ENCODE measurements at regions of chrX and their contacts with region 1.

Region 1: GRCh38 chrX:79270401-79270800 is 96.7 kb downstream of the ITM2A start:
- DNase-seq: peak; percentile 36 to 44
- ATAC-seq: peak in 7 of 8 donors; percentile 58 to 88 (median 75)
- H3K4me3 ChIP-seq: no peak overlapping the region
- H3K27ac ChIP-seq: peak overlapping the region in 3 of 10 donors; percentile 29 to 65 (median 56)
- H3K4me1 ChIP-seq: peaks cover 0 to 14% (median 0%) of the 10 kb centered on the region in 9 donors
- H3K27me3 ChIP-seq: no peaks in the 10 kb centered on the region
- CTCF ChIP-seq: peak in 8 of 9 donors; percentile 7 to 71 (median 56)

Region 2: DNA sequence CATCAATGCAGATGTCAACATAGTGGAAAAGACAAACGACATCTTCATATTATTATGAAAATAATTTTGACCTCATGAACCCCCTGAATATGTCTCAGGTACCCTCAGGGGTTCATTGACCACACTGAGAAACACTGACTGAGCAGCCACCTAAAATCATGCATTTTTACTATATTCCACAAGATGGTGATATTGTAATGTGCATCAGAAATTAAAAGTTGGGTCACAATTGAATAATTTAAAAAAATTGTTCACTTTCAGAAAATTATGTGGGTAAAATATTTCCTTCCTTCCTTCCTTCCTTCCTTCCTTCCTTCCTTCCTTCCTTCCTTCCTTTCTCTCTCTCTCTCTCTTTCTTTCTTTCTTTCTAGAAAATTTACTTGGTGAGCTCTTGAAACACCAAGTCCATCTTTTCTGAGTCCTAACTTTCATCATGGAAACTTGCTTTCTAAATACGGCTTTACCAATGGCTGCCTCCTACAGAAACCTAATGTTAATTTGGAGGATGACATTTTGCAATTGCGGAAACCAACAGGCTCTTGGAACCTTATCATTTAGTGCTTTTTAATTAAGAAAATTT is 714.9 kb before region 1 on chrX:
- intact Hi-C with region 1: loop called in 1 of 10 experiments (anchors 5 kb)
- DNase-seq: no peak
- ATAC-seq: no peak
- H3K4me3 ChIP-seq: no peak overlapping the region
- H3K27ac ChIP-seq: no peak overlapping the region
- H3K4me1 ChIP-seq: no peaks in the 10 kb centered on the region
- H3K27me3 ChIP-seq: no peaks in the 10 kb centered on the region
- CTCF ChIP-seq: peak; percentile 6 to 60 (median 45)

Region 3: DNA sequence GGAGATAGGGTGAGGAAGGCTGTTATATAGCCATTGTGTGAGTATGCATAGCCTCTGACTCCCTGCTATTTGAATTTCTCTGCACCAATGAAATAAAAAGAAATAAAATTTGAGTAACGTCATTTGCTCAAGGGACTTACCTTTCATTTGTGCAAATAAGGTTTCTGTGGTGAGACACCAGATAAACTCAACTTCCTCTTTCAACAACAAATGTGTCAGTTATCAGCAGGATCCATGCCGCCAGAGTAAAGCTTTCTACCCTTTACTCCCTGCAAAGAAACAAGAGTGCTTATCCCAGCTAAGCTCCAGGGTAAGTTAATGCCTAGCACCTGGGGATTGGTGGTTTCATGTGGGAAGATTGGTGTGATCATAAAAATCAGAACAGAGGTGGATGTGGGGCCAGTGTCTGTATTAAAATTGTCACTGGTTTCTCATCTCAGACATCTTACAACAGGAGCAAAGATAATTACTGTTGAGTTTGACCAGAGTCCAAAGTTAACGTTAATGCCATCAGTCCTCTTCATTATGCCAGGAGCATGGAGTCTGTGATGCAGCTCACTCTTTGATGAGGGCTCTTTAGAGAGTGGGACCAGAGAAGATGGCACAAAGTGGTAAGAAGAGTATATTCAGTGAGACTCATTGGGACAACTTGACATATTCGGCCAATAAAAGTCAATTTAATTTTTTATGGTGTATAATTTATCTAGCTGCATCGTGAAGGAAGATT is 325.1 kb before region 1 on chrX and contains the start of gene P2RY10:
- intact Hi-C with region 1: loop called in 1 of 10 experiments (anchors 10 kb)
- DNase-seq: no peak
- ATAC-seq: no peak
- H3K4me3 ChIP-seq: peak within 1 kb of the TSS in 1 of 10 donors; percentile 42
- H3K27ac ChIP-seq: peak within 1 kb of the TSS in 1 of 10 donors; percentile 74
- H3K4me1 ChIP-seq: peaks cover 0 to 3% (median 0%) of the 10 kb centered on the region in 9 donors
- H3K27me3 ChIP-seq: peaks cover 0 to 16% (median 0%) of the 10 kb centered on the region in 7 donors
- CTCF ChIP-seq: no peak
- total RNA-seq, gene P2RY10: 0.17 to 2.2 (median 0.45) TPM in 6 of 10 donors, not detected in the others

Region 4: DNA sequence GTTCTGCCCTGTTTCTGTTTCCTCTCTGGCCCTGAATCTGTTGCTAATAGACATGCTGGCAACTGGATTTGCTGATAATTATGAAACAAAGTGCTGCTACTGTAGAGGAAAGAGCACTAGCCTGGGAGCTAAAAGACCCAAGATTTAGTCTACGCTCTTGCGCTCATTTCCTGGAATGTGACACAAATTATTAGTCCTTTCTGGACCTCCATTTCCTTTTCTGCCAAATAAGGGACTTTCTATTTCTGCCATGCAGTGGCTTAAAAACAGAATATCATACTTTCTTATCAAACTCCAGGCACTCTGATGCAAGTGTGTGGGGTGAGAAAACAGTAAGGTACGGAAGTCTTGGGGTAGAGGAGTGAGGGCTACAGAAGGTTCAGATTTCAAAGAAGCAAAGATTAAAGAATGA is 174.2 kb before region 1 on chrX:
- intact Hi-C with region 1: loop called in 1 of 10 experiments (anchors 10 kb)
- DNase-seq: peak in 1 of 2 donors; percentile 3
- ATAC-seq: peak in 5 of 8 donors; percentile 16 to 73 (median 49)
- H3K4me3 ChIP-seq: no peak overlapping the region
- H3K27ac ChIP-seq: peak overlapping the region in 5 of 10 donors; percentile 51 to 72 (median 64)
- H3K4me1 ChIP-seq: peaks cover 0 to 9% (median 0%) of the 10 kb centered on the region in 9 donors
- H3K27me3 ChIP-seq: peaks cover 0 to 6% (median 0%) of the 10 kb centered on the region in 7 donors
- CTCF ChIP-seq: no peak

Region 5: DNA sequence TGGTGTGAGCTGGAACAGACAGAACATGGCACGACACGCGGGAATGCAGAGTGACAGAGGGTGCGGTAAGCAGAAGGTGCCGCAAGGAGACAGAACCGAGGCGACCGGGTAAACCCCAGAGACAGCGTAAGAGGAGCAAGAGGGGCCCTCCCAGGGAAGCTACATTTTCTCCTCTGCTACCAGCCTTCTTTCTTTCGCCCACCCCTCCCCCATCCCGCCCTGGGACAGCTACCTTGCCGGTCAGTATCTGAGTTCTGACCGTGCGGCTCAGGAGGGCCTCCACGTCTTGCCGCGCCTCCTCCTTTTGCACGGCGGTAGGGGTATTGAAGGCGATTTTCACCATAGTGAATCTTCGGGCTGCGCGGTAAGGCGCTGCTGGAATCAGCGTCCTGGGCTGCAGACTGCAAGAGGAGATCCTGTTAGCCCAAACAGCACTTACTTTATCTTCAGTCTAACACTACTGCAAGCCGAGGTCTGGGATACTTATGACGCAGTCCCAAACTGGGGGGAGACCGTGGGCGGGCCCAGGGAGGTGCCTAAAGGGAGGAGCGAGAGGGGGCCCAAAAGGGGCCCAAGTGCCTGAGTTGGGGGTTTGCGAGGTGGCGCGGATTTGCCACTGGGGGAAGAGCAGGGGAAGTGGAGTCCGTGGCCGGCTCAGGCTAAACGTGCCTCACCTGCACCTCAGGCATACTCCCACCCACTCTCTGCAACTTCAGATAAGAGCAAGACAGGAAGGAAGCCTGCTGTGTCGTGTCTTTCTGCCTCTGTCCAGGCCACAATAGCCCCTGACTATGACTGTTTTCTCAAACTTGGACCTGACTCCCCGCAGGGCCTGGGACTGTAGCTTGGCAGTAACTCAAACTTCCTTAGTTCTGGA is 96.7 kb after region 1 on chrX and contains the start of gene ITM2A:
- intact Hi-C with region 1: loop called in 2 of 10 experiments (anchors 5 to 10 kb)
- DNase-seq: peak; percentile 32 to 46
- ATAC-seq: peak; percentile 79 to 94 (median 89)
- H3K4me3 ChIP-seq: peak within 1 kb of the TSS; percentile 32 to 63 (median 52)
- H3K27ac ChIP-seq: peak within 1 kb of the TSS in 9 of 10 donors; percentile 61 to 82 (median 69)
- H3K4me1 ChIP-seq: peaks cover 0 to 4% (median 0%) of the 10 kb centered on the region in 9 donors
- H3K27me3 ChIP-seq: peaks cover 0 to 4% (median 0%) of the 10 kb centered on the region in 7 donors
- CTCF ChIP-seq: no peak
- total RNA-seq, gene ITM2A: 43.5 to 85.2 (median 64.4) TPM

Region 6: GRCh38 chrX:79412972-79413371 is 142.6 kb after region 1 on chrX:
- intact Hi-C with region 1: loop called in 1 of 10 experiments (anchors 10 kb)
- DNase-seq: no peak
- ATAC-seq: no peak
- H3K4me3 ChIP-seq: peak overlapping the region in 9 of 10 donors; percentile 3 to 49 (median 42)
- H3K27ac ChIP-seq: peak overlapping the region in 4 of 10 donors; percentile 5 to 69 (median 64)
- H3K4me1 ChIP-seq: no peaks in the 10 kb centered on the region
- H3K27me3 ChIP-seq: peaks cover 0 to 5% (median 0%) of the 10 kb centered on the region in 7 donors
- CTCF ChIP-seq: peak in 8 of 9 donors; percentile 14 to 65 (median 44)

Measured in heart right ventricle (tissue), 16 donors.